Mammary epithelial cell (primary cell): ENCODE measurements at regions of chr16 and their contacts with region 1.

Region 1: GRCh38 chr16:30370444-30371247 is at the start of gene TBC1D10B:
- DNase-seq: peak; percentile 100
- H3K4me3 ChIP-seq: peak within 1 kb of the TSS; percentile 74 to 79 (median 75)
- H3K27ac ChIP-seq: peak within 1 kb of the TSS; percentile 36
- H3K4me1 ChIP-seq: peaks cover 13% of the 10 kb centered on the region
- H3K27me3 ChIP-seq: no peaks in the 10 kb centered on the region
- CTCF ChIP-seq: peak in 1 of 2 donors; percentile 36
- total RNA-seq, gene TBC1D10B: 27.3 to 45.5 TPM

Region 2: GRCh38 chr16:30052671-30053372 is 317.8 kb before region 1 on chr16:
- CTCF ChIA-PET with region 1: no interaction called
- dilution Hi-C with region 1: loop called (anchors 10 kb)
- in situ Hi-C with region 1: no loop called
- intact Hi-C with region 1: no loop called
- DNase-seq: peak; percentile 90
- H3K4me3 ChIP-seq: peak overlapping the region; percentile 77 to 90 (median 89)
- H3K27ac ChIP-seq: peak overlapping the region; percentile 78
- H3K4me1 ChIP-seq: peaks cover 22% of the 10 kb centered on the region
- H3K27me3 ChIP-seq: no peaks in the 10 kb centered on the region
- CTCF ChIP-seq: no peak

Region 3: GRCh38 chr16:30335598-30336474 is 34.8 kb before region 1 on chr16:
- CTCF ChIA-PET with region 1: no interaction called
- dilution Hi-C with region 1: no loop called
- in situ Hi-C with region 1: no loop called
- intact Hi-C with region 1: loop called (anchors 1 kb)
- DNase-seq: peak; percentile 58
- H3K4me3 ChIP-seq: peak overlapping the region; percentile 56 to 84 (median 74)
- H3K27ac ChIP-seq: peak overlapping the region; percentile 34
- H3K4me1 ChIP-seq: peaks cover 4% of the 10 kb centered on the region
- H3K27me3 ChIP-seq: no peaks in the 10 kb centered on the region
- CTCF ChIP-seq: no peak

Region 4: GRCh38 chr16:30407102-30407803 is 36.6 kb after region 1 on chr16 and contains the start of gene ZNF771:
- CTCF ChIA-PET with region 1: no interaction called
- dilution Hi-C with region 1: no loop called
- in situ Hi-C with region 1: no loop called
- intact Hi-C with region 1: loop called (anchors 2 kb)
- DNase-seq: peak; percentile 83
- H3K4me3 ChIP-seq: peak within 1 kb of the TSS; percentile 48 to 82 (median 82)
- H3K27ac ChIP-seq: peak within 1 kb of the TSS; percentile 64
- H3K4me1 ChIP-seq: peaks cover 12% of the 10 kb centered on the region
- H3K27me3 ChIP-seq: no peaks in the 10 kb centered on the region
- CTCF ChIP-seq: peak in 1 of 2 donors; percentile 10
- total RNA-seq, gene ZNF771: 6.3 to 6.5 TPM

Region 5: DNA sequence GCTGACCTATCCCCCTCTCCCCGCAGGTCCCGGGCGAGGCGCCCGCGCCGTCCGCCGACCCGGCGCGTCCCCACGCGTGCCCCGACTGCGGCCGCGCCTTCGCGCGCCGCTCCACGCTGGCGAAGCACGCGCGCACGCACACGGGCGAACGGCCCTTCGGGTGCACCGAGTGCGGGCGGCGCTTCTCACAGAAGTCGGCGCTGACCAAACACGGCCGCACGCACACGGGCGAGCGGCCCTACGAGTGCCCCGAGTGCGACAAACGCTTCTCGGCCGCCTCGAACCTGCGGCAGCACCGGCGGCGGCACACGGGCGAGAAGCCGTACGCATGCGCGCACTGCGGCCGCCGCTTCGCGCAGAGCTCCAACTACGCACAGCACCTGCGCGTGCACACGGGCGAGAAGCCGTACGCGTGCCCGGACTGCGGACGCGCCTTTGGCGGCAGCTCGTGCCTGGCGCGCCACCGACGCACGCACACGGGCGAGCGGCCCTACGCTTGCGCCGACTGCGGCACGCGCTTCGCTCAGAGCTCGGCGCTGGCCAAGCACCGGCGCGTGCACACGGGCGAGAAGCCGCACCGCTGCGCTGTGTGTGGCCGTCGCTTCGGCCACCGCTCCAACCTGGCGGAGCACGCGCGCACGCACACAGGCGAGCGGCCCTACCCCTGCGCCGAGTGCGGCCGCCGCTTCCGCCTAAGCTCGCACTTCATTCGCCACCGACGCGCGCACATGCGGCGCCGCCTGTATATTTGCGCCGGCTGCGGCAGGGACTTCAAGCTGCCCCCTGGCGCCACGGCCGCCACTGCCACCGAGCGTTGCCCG is 47.1 kb after region 1 on chr16:
- CTCF ChIA-PET with region 1: no interaction called
- dilution Hi-C with region 1: no loop called
- in situ Hi-C with region 1: no loop called
- intact Hi-C with region 1: no loop called
- DNase-seq: peak; percentile 92
- H3K4me3 ChIP-seq: peak overlapping the region in 2 of 3 experiments; percentile 50 to 62
- H3K27ac ChIP-seq: no peak overlapping the region
- H3K4me1 ChIP-seq: peaks cover 13% of the 10 kb centered on the region
- H3K27me3 ChIP-seq: no peaks in the 10 kb centered on the region
- CTCF ChIP-seq: peak in 1 of 2 donors; percentile 22

Region 6: GRCh38 chr16:30534368-30535105 is 163.9 kb after region 1 on chr16 and contains the start of gene ZNF747:
- CTCF ChIA-PET with region 1: no interaction called
- dilution Hi-C with region 1: no loop called
- in situ Hi-C with region 1: no loop called
- intact Hi-C with region 1: no loop called
- DNase-seq: peak; percentile 75
- H3K4me3 ChIP-seq: peak within 1 kb of the TSS; percentile 50 to 64 (median 57)
- H3K27ac ChIP-seq: peak within 1 kb of the TSS; percentile 71
- H3K4me1 ChIP-seq: peaks cover 15% of the 10 kb centered on the region
- H3K27me3 ChIP-seq: no peaks in the 10 kb centered on the region
- CTCF ChIP-seq: peak in 1 of 2 donors; percentile 7
- total RNA-seq, gene ZNF747: 6.7 to 11.0 TPM

Region 7: GRCh38 chr16:30677931-30678585 is 307.4 kb after region 1 on chr16:
- CTCF ChIA-PET with region 1: no interaction called
- dilution Hi-C with region 1: no loop called
- in situ Hi-C with region 1: no loop called
- intact Hi-C with region 1: no loop called
- DNase-seq: no peak
- H3K4me3 ChIP-seq: no peak overlapping the region
- H3K27ac ChIP-seq: no peak overlapping the region
- H3K4me1 ChIP-seq: no peaks in the 10 kb centered on the region
- H3K27me3 ChIP-seq: no peaks in the 10 kb centered on the region
- CTCF ChIP-seq: no peak